ENCODE measurements at regions of chr7 and their contacts with region 1.

Region 1: GRCh38 chr7:23175938-23176337 is 5.9 kb upstream of the NUP42 start:
- DNase-seq: no peak
- ATAC-seq: no peak
- H3K4me3 ChIP-seq: no peak overlapping the region
- H3K27ac ChIP-seq: no peak overlapping the region
- H3K4me1 ChIP-seq: no peaks in the 10 kb centered on the region
- H3K27me3 ChIP-seq: no peaks in the 10 kb centered on the region
- CTCF ChIP-seq: no peak

Region 2: DNA sequence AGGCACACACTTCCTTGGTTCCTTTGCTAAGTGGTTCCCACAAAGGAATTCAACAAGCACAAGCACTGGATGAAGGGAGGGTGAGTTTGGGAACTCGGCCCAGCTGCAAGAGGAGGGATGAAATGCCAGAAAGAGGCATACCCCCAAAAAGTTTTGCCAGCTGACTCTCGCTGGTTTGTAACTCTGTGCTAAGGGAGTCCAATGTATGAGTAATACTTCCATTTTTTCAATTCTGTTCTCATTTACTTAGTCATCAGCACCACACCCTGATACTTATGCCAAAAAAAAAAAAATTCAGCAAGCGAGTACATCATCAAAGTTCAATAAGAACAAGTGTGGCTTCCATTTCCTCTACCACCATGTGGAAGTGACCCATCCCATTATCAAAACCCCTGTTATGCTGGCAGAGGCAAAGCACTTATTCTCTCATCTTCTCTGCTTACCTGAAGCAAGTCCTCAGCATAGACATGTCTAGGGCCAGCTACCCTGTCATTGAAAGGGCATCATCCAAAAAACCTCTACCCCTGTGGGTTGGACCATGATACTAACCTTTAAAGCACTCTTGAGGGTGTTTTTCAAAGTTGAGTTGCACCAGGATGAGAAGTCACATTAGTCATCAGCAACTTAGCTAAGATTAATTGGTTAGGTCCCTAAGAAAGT is 155.1 kb before region 1 on chr7:
- intact Hi-C with region 1: no loop called
- DNase-seq: no peak
- ATAC-seq: peak in 3 of 4 donors; percentile 48 to 83 (median 57)
- H3K4me3 ChIP-seq: no peak overlapping the region
- H3K27ac ChIP-seq: no peak overlapping the region
- H3K4me1 ChIP-seq: no peaks in the 10 kb centered on the region
- H3K27me3 ChIP-seq: no peaks in the 10 kb centered on the region
- CTCF ChIP-seq: no peak

Region 3: DNA sequence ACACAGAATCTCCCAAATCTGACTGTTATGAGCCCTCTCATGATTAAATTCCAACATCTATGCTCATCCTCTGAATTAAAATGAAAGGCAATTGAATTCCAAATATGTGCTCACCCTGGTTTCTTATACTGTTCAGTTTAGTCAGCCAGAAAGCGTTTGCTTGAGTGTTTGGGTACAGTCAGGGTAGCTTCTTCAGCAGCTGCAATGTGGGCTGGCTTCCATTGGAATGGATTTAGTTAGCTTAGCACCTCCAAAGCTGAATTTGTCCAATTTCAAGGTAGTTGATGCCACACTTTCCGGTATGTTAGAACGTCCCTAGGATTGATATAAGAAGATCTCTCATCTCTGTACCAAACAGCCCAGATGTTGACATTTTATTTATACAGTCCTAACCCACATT is 61.0 kb before region 1 on chr7:
- intact Hi-C with region 1: loop called in 1 of 3 experiments (anchors 10 kb)
- DNase-seq: no peak
- ATAC-seq: no peak
- H3K4me3 ChIP-seq: no peak overlapping the region
- H3K27ac ChIP-seq: no peak overlapping the region
- H3K4me1 ChIP-seq: no peaks in the 10 kb centered on the region
- H3K27me3 ChIP-seq: no peaks in the 10 kb centered on the region
- CTCF ChIP-seq: no peak

Region 4: DNA sequence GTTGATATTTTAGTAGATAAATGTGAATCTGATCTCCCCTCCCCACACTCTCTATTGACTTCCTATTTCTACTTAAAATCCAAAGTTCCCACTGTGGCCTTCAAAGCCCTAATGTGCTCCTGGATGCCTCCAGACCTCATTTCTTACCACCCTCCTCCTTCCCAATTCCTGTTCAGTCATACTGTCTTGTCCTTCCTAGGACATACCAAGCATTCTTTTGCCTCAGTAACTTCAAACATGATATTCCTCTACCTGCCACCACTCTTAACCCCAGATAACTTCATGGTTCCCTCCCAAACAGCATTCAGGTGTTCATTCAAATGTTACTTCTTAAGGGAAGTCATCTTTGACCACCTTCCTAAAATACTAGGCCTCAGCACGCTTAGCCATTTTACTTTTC is 469.9 kb after region 1 on chr7:
- intact Hi-C with region 1: no loop called
- DNase-seq: no peak
- ATAC-seq: no peak
- H3K4me3 ChIP-seq: no peak overlapping the region
- H3K27ac ChIP-seq: no peak overlapping the region
- H3K4me1 ChIP-seq: no peaks in the 10 kb centered on the region
- H3K27me3 ChIP-seq: no peaks in the 10 kb centered on the region
- CTCF ChIP-seq: no peak